ENCODE measurements at regions of chr7 and their contacts with region 1.

Region 1: DNA sequence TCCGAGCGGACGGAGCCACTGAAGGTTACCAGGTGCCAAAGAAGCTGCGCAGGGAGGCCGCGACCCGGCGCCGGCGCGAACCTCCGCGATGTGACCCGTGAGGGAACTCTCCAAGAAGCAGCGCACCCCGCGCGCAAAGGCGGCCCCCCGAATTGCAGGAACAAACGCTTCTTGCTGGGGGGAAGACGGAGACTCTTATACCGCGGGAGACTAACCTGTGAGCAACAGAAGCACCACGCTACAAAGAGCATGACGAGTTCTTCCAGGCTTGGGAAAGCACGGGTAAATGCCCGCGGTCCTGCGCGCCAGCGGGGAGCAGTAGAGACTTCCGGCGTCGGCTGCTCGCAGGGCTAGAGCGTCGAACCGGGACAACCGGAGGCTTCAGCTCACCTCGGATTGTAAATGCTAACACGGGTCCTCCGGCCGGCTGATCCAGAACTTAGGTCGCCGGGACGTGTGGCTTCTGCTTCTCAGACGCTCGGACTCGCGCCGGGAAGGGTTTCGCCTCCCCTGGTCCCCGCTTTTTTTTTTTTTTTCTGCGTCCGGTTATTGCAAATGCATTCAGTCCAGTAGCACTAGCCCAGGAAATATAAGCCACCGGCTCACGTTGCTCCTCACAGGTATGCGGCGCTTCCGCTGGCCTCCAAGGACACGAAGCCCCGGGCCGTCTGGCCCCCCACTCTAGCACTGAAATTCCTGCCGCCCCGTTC is at the start of gene COA1:
- DNase-seq: peak; percentile 90
- ATAC-seq: peak; percentile 96
- H3K4me3 ChIP-seq: peak within 1 kb of the TSS; percentile 81 to 97
- H3K27ac ChIP-seq: peak within 1 kb of the TSS; percentile 67
- H3K4me1 ChIP-seq: peaks cover 5 to 11% of the 10 kb centered on the region in 2 experiments; a peak in 3 of 4 replicates
- H3K27me3 ChIP-seq: no peaks in the 10 kb centered on the region
- CTCF ChIP-seq: no peak; a peak in 1 of 6 replicates
- POLR2A ChIP-seq: peak; percentile 86
- RAD21 ChIP-seq: peak; percentile 25; the same call in 1 of the 2 replicates
- total RNA-seq, gene COA1: 78.5 TPM

Region 2: DNA sequence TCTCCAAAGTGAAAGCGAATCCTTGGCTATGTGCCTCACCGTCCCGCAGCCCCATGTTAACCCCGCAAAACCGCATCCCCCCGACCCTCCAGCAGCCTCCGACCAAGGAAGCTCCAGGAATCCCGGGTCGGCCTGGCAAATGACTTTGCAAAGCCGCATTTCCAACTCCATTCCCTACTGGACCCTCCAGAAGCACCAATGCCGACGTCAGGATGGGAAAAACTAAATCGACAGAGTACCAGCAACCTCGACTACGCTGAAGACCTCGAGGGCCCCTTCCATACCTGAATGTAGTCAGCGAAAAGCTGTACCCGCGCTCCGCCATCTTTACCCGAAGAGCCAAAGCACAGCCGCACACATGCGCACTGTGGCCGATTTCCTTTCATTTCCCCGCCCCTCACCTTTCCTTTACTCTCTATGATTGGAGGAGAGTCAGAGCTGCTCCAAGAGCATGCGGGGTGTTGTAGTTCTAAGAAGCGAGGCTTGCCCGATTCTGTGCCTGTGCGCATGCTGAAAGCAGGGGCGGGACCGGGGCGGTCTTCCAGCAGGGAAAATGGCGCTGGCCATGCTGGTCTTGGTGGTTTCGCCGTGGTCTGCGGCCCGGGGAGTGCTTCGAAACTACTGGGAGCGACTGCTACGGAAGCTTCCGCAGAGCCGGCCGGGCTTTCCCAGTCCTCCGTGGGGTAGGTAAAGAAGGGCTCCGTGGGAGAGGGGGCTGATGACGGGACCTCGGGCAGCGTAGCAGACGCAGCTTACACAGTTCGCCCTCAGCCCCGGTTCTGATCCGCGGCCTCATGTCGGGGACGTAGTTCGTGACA is 797.3 kb before region 1 on chr7 and contains the starts of genes MRPL32 and PSMA2:
- CTCF ChIA-PET with region 1: no interaction called
- POLR2A ChIA-PET with region 1: no interaction called
- RAD21 ChIA-PET with region 1: no interaction called
- intact Hi-C with region 1: loop called (anchors 10 kb)
- DNase-seq: peak; percentile 95
- ATAC-seq: peak; percentile 100
- H3K4me3 ChIP-seq: peak within 1 kb of the TSS; percentile 75 to 93
- H3K27ac ChIP-seq: peak within 1 kb of the TSS; percentile 47
- H3K4me1 ChIP-seq: peaks cover 5 to 26% of the 10 kb centered on the region in 2 experiments; a peak in 2 of 4 replicates
- H3K27me3 ChIP-seq: no peaks in the 10 kb centered on the region
- CTCF ChIP-seq: no peak
- POLR2A ChIP-seq: peak; percentile 92
- RAD21 ChIP-seq: no peak
- total RNA-seq, gene MRPL32: 47.5 TPM
- total RNA-seq, gene PSMA2: 152 TPM

Region 3: GRCh38 chr7:43385856-43386255 is 343.5 kb before region 1 on chr7:
- CTCF ChIA-PET with region 1: no interaction called
- POLR2A ChIA-PET with region 1: no interaction called
- RAD21 ChIA-PET with region 1: no interaction called
- intact Hi-C with region 1: no loop called
- DNase-seq: no peak
- ATAC-seq: no peak
- H3K4me3 ChIP-seq: no peak overlapping the region
- H3K27ac ChIP-seq: no peak overlapping the region
- H3K4me1 ChIP-seq: peaks cover 0 to 8% of the 10 kb centered on the region in 2 experiments; a peak in 1 of 4 replicates
- H3K27me3 ChIP-seq: no peaks in the 10 kb centered on the region
- CTCF ChIP-seq: no peak
- POLR2A ChIP-seq: no peak
- RAD21 ChIP-seq: no peak

Region 4: GRCh38 chr7:43808135-43808809 is 78.9 kb after region 1 on chr7:
- CTCF ChIA-PET with region 1: no interaction called
- POLR2A ChIA-PET with region 1: no interaction called
- RAD21 ChIA-PET with region 1: no interaction called
- intact Hi-C with region 1: loop called (anchors 1 kb)
- DNase-seq: no peak
- ATAC-seq: no peak
- H3K4me3 ChIP-seq: no peak overlapping the region
- H3K27ac ChIP-seq: no peak overlapping the region
- H3K4me1 ChIP-seq: peaks cover 0 to 5% of the 10 kb centered on the region in 2 experiments; a peak in 1 of 4 replicates
- H3K27me3 ChIP-seq: no peaks in the 10 kb centered on the region
- CTCF ChIP-seq: no peak
- POLR2A ChIP-seq: no peak
- RAD21 ChIP-seq: no peak

Region 5: DNA sequence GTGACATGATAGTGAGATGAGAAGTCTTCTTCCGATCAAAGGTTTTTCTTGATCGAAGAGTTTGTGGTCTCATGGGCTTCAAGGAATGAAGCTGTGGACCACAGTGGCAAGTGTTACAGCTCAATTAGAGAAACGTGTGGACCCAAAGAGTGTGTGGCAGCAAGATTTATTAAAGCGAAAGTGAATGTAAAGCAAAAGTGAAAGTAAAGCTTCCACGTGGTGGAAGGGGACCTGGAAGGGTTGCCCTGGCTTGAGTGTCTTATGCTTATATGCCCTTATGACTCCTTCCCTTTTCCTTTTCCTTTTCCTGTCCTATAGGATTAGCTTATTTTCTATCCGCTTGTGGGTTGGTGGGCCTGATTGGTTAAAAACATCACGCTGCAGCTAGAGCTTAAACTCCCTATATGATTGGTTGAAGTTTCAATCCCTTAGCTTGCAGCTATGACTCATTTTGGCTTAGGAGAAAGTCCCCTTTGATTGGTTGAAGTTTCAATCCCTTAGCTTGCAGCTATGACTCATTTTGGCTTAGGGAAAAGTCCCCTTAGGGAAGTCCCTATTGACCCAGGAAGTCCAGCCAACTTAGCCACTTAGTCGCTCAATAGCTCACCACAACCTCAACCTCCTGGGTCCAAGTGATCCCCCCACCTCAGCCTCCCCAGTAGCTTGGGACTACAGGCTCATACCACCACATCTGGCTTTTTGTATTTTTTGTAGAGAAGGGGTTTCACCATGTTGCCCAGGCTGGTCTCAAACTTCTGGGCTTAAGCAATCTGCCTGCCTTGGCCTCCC is 105.3 kb after region 1 on chr7:
- CTCF ChIA-PET with region 1: no interaction called
- POLR2A ChIA-PET with region 1: no interaction called
- RAD21 ChIA-PET with region 1: no interaction called
- intact Hi-C with region 1: loop called (anchors 2 kb)
- DNase-seq: no peak
- ATAC-seq: no peak
- H3K4me3 ChIP-seq: no peak overlapping the region
- H3K27ac ChIP-seq: no peak overlapping the region
- H3K4me1 ChIP-seq: peaks cover 0 to 24% of the 10 kb centered on the region in 2 experiments; a peak in 2 of 4 replicates
- H3K27me3 ChIP-seq: no peaks in the 10 kb centered on the region
- CTCF ChIP-seq: no peak
- POLR2A ChIP-seq: no peak
- RAD21 ChIP-seq: no peak